ENCODE measurements at regions of chr4 and their contacts with region 1.

Region 1: GRCh38 chr4:180225977-180226376 is 2017.2 kb upstream of the TENM3 start:
- DNase-seq: no peak
- ATAC-seq: no peak
- H3K4me3 ChIP-seq: no peak overlapping the region
- H3K4me3 Mint-ChIP-seq: no peak overlapping the region
- H3K27ac ChIP-seq: no peak overlapping the region
- H3K27ac Mint-ChIP-seq: no peak overlapping the region
- H3K4me1 ChIP-seq: no peaks in the 10 kb centered on the region
- H3K4me1 Mint-ChIP-seq: no peaks in the 10 kb centered on the region
- H3K27me3 ChIP-seq: no peaks in the 10 kb centered on the region
- H3K27me3 Mint-ChIP-seq: no peaks in the 10 kb centered on the region

Region 2: DNA sequence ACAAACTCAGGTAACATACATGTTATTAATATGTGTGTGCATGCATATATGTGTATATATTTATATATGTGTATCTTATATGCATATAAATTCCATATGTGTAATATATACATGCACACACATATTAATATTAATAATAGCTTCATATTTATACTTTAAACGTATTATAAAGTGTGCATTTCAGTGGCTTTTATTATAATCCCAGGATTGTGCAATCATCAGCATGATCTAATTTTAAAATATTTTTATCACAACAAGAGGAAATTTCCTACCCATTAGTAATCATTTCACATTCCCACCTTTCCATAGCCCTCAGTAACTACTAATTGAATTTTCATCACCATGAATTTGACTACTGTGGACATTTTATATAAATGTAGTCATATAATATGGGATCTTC is 194.6 kb before region 1 on chr4:
- CTCF ChIA-PET with region 1: no interaction called
- POLR2A ChIA-PET with region 1: no interaction called
- DNase-seq: no peak
- ATAC-seq: no peak
- H3K4me3 ChIP-seq: no peak overlapping the region
- H3K4me3 Mint-ChIP-seq: no peak overlapping the region
- H3K27ac ChIP-seq: no peak overlapping the region
- H3K27ac Mint-ChIP-seq: no peak overlapping the region
- H3K4me1 ChIP-seq: no peaks in the 10 kb centered on the region
- H3K4me1 Mint-ChIP-seq: no peaks in the 10 kb centered on the region
- H3K27me3 ChIP-seq: no peaks in the 10 kb centered on the region
- H3K27me3 Mint-ChIP-seq: no peaks in the 10 kb centered on the region

Region 3: GRCh38 chr4:180203349-180203748 is 22.6 kb before region 1 on chr4:
- CTCF ChIA-PET with region 1: no interaction called
- POLR2A ChIA-PET with region 1: no interaction called
- DNase-seq: no peak
- ATAC-seq: no peak
- H3K4me3 ChIP-seq: no peak overlapping the region
- H3K4me3 Mint-ChIP-seq: no peak overlapping the region
- H3K27ac ChIP-seq: no peak overlapping the region
- H3K27ac Mint-ChIP-seq: no peak overlapping the region
- H3K4me1 ChIP-seq: no peaks in the 10 kb centered on the region
- H3K4me1 Mint-ChIP-seq: no peaks in the 10 kb centered on the region
- H3K27me3 ChIP-seq: no peaks in the 10 kb centered on the region
- H3K27me3 Mint-ChIP-seq: no peaks in the 10 kb centered on the region

Region 4: GRCh38 chr4:180240670-180241069 is 14.7 kb after region 1 on chr4:
- CTCF ChIA-PET with region 1: no interaction called
- POLR2A ChIA-PET with region 1: interaction called in 1 of 2 experiments, 14 read pairs
- DNase-seq: no peak
- ATAC-seq: no peak
- H3K4me3 ChIP-seq: no peak overlapping the region
- H3K4me3 Mint-ChIP-seq: no peak overlapping the region
- H3K27ac ChIP-seq: no peak overlapping the region
- H3K27ac Mint-ChIP-seq: no peak overlapping the region
- H3K4me1 ChIP-seq: peaks cover 0 to 2% of the 10 kb centered on the region in 2 experiments
- H3K4me1 Mint-ChIP-seq: no peaks in the 10 kb centered on the region
- H3K27me3 ChIP-seq: no peaks in the 10 kb centered on the region
- H3K27me3 Mint-ChIP-seq: no peaks in the 10 kb centered on the region

Measured in T-cell (primary cell).